ENCODE measurements at regions of chr3 and their contacts with region 1.

Region 1: GRCh38 chr3:30768703-30769685 is 125.5 kb downstream of the GADL1 start:
- DNase-seq: peak; percentile 89
- ATAC-seq: peak; percentile 39
- H3K4me3 Mint-ChIP-seq: no peak overlapping the region
- H3K27ac Mint-ChIP-seq: no peak overlapping the region
- H3K4me1 Mint-ChIP-seq: peaks cover 3% of the 10 kb centered on the region
- H3K27me3 Mint-ChIP-seq: peaks cover 2% of the 10 kb centered on the region
- CTCF ChIP-seq: peak; percentile 75

Region 2: DNA sequence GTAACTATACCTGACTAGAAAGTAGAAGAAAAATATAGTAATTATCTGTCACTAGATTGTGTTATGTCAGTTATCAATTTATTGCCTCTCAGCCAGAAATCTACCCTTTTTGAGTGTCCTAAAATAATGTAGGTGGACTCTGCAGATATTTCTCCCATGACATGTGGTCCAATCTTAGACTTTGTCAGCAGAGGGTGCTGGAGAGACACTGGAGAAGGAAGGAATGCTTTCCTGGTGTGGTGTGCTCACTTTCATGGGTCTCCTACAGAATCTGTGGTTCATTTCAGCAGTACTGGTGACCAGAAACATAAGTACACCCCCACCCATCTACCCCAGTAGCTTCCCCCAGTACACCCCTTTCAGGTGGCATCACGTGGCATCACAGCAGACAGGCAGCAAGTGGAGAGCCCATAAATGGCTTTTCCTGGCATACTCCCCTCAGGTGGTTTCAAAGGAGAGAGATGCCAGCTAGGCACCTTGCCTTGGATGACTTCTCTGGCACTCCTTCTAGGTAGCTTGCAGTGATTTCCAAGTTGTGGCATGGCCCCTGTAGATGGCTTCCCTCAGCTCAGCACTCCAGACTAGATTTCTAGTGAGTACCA is 10.8 kb after region 1 on chr3:
- CTCF ChIA-PET with region 1: interaction called, 13 read pairs
- POLR2A ChIA-PET with region 1: no interaction called
- intact Hi-C with region 1: no loop called
- DNase-seq: peak; percentile 9
- ATAC-seq: no peak
- H3K4me3 Mint-ChIP-seq: no peak overlapping the region
- H3K27ac Mint-ChIP-seq: no peak overlapping the region
- H3K4me1 Mint-ChIP-seq: no peaks in the 10 kb centered on the region
- H3K27me3 Mint-ChIP-seq: peaks cover 4% of the 10 kb centered on the region
- CTCF ChIP-seq: peak; percentile 28

Region 3: DNA sequence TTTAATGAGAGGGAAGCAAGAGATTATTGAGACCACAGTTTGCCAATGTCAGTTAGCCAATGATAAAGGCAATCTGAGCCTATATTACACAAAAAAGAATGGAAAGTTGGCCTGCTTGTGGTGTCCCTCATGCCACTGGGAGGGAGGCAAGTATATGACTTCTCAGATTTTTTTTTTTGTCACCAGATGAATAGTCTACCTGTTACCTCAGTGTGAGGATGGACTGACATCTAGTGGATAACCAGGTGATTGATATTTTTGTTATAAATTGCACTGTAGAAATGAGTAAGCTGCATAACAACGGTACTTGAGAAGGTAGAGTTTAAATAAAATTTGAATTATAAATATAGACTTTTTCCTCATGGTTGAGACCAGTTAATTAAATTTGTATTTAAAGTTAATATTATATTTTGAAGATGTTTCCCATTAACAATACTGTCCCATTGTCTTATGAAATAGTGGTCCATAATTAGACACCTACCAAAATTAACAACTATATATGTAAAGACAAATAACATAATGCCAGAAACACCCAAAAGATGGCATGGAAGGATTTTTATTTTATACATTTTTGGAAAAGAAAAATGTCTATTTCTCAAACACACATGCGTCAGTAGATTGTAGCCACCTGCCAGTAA is 363.3 kb after region 1 on chr3:
- CTCF ChIA-PET with region 1: interaction called, 27 read pairs
- POLR2A ChIA-PET with region 1: no interaction called
- intact Hi-C with region 1: loop called (anchors 5 kb)
- DNase-seq: no peak
- ATAC-seq: no peak
- H3K4me3 Mint-ChIP-seq: no peak overlapping the region
- H3K27ac Mint-ChIP-seq: no peak overlapping the region
- H3K4me1 Mint-ChIP-seq: no peaks in the 10 kb centered on the region
- H3K27me3 Mint-ChIP-seq: no peaks in the 10 kb centered on the region
- CTCF ChIP-seq: peak; percentile 77